ENCODE measurements at regions of chr4 and their contacts with region 1.

Region 1: DNA sequence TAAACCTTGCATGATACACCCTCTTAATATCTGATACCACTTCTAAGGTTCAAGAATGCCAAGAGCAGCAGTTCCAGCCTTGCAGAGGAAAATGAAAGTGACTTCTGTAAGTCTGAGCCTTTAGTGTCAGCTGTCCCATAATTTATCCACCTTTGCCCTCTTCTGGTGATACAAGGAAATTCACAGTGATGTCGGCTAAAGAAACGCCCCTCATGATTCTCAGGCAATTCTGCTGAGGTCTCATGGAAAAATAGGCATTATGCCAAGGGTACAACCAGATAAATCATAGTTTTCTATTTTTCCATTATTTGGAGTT is 172.2 kb upstream of the CXCL13 start:
- DNase-seq: no peak
- ATAC-seq: peak; percentile 70
- H3K4me3 Mint-ChIP-seq: no peak overlapping the region
- H3K27ac Mint-ChIP-seq: no peak overlapping the region
- H3K4me1 Mint-ChIP-seq: peaks cover 4% of the 10 kb centered on the region
- H3K27me3 Mint-ChIP-seq: no peaks in the 10 kb centered on the region
- CTCF ChIP-seq: no peak

Region 2: DNA sequence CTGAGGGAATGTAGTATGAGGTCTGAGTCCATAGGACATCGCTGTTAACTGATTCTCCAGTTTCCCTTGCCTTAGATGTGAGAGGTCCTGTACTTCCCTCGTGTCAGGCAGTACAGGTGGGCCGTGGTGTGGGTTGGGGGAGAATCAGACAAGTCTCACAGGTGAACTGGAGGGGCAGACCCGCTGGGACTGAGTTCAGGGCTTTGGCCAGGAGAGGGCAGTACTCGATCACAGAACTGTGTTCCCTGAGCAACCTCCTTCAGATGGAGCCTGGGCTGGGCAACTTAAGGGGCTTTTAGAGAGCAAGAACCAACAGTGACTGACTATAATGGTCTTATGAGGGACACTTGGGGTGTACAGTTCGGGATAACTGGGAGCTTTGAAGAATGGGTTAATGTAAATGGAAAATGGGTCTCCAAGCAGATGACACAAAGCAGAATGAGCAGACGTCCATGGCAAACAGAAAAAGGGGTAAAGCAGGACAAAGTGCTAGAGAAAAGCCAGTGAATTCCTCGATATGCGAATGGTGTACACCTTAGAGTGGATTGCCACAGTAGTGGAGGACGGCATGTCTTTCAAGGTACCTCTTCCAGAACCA is 192.8 kb before region 1 on chr4:
- CTCF ChIA-PET with region 1: interaction called, 4 read pairs
- POLR2A ChIA-PET with region 1: no interaction called
- intact Hi-C with region 1: loop called (anchors 1 kb)
- DNase-seq: peak; percentile 46
- ATAC-seq: peak; percentile 56
- H3K4me3 Mint-ChIP-seq: no peak overlapping the region
- H3K27ac Mint-ChIP-seq: no peak overlapping the region
- H3K4me1 Mint-ChIP-seq: no peaks in the 10 kb centered on the region
- H3K27me3 Mint-ChIP-seq: no peaks in the 10 kb centered on the region
- CTCF ChIP-seq: no peak

Region 3: DNA sequence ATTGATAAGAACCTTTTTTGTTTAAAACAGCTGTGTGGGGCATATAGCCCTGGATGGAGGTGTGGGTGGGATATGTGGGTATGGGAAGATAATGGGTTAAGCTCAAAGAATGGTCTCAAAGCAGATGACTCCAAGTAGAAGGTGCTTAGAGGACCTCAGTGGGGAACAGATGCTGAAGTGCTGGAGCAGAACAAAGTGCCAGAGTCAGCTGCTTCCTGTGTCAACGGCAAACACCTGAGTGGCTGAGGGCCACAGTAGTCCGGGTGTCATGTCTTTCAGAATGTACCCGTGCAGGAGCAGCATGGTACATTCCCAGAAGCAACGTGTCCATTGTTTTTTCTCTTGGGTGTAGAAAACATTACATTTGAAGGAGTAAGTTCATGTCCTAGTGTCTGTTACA is 65.7 kb before region 1 on chr4:
- CTCF ChIA-PET with region 1: no interaction called
- POLR2A ChIA-PET with region 1: interaction called, 3 read pairs
- intact Hi-C with region 1: loop called (anchors 5 kb)
- DNase-seq: no peak
- ATAC-seq: peak; percentile 18
- H3K4me3 Mint-ChIP-seq: no peak overlapping the region
- H3K27ac Mint-ChIP-seq: no peak overlapping the region
- H3K4me1 Mint-ChIP-seq: peaks cover 10% of the 10 kb centered on the region
- H3K27me3 Mint-ChIP-seq: peaks cover 1% of the 10 kb centered on the region
- CTCF ChIP-seq: no peak

Region 4: GRCh38 chr4:77385124-77385969 is 48.0 kb before region 1 on chr4:
- CTCF ChIA-PET with region 1: interaction called, 7 read pairs
- POLR2A ChIA-PET with region 1: no interaction called
- intact Hi-C with region 1: loop called (anchors 1 kb)
- DNase-seq: peak; percentile 36
- ATAC-seq: peak; percentile 47
- H3K4me3 Mint-ChIP-seq: no peak overlapping the region
- H3K27ac Mint-ChIP-seq: no peak overlapping the region
- H3K4me1 Mint-ChIP-seq: no peaks in the 10 kb centered on the region
- H3K27me3 Mint-ChIP-seq: no peaks in the 10 kb centered on the region
- CTCF ChIP-seq: no peak

Region 5: DNA sequence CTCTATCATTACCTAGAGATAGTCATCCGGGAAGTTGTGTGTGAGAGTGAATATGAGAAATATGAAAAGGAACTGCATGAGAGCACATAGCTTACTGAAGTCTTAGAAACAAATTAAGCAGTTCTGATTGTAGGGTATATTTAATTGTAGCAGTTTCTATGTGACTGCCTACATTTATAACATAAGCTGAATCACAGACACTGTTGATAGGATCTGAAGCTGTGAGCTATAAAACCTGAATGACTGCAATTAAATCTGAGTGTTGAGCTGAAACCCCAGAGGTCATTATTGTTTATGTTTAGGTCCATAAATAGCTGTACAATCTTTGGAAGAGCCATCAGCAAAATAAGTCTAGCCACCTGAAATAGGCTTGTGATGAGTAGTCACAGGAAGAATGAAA is 37.9 kb before region 1 on chr4:
- CTCF ChIA-PET with region 1: no interaction called
- POLR2A ChIA-PET with region 1: no interaction called
- intact Hi-C with region 1: no loop called
- DNase-seq: no peak
- ATAC-seq: no peak
- H3K4me3 Mint-ChIP-seq: no peak overlapping the region
- H3K27ac Mint-ChIP-seq: no peak overlapping the region
- H3K4me1 Mint-ChIP-seq: no peaks in the 10 kb centered on the region
- H3K27me3 Mint-ChIP-seq: peaks cover 5% of the 10 kb centered on the region
- CTCF ChIP-seq: no peak

Region 6: DNA sequence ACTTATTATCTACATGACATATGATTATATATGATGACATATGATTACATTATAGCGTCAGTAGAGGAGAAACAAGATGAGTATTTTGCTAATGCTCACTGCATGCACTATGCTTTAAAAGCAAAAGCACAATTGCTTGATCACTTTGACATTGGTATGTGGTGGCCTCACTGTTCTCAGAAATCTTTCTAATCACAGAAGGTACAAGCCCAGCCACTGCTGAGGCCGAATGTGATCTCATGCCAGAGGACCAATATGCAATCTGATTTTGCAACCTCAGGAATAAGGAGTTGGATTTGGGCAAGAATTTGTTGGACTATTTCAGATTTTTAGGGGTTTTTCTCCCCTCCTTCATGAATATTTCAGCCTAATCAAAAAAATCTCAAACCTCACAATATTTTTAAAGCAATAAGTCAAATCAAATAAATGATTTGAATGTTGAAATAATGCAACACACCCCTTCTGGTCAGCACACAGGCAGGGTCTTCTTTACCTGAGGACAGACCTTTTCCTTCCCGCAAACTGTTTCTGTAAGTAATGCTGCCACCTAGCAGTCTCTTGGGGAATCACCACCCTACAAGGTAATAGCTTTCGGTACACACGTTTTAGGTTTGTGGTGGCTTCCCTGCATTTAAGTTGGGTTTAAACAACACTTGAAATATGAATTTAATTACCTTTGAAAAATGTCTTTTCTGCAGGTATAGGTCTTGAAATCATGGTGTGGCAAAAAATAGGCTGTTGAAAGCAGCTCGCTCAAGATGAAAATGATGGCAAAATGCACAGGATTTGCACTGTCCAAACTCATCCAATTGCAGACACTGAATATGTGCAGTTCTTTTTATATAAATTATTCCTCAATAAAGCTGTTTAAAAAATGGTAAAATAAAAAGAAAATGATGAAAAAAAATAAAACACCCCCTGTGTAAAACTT is 167.4 kb after region 1 on chr4:
- CTCF ChIA-PET with region 1: interaction called, 16 read pairs
- POLR2A ChIA-PET with region 1: no interaction called
- intact Hi-C with region 1: loop called (anchors 1 kb)
- DNase-seq: no peak
- ATAC-seq: peak; percentile 47
- H3K4me3 Mint-ChIP-seq: no peak overlapping the region
- H3K27ac Mint-ChIP-seq: no peak overlapping the region
- H3K4me1 Mint-ChIP-seq: no peaks in the 10 kb centered on the region
- H3K27me3 Mint-ChIP-seq: peaks cover 4% of the 10 kb centered on the region
- CTCF ChIP-seq: peak; percentile 53